ENCODE measurements at regions of chr3 and their contacts with region 1.

Region 1: GRCh38 chr3:42052484-42053351 is 38.4 kb upstream of the TRAK1 start:
- DNase-seq: no peak
- ATAC-seq: no peak
- H3K4me3 ChIP-seq: no peak overlapping the region
- H3K27ac ChIP-seq: no peak overlapping the region
- H3K4me1 ChIP-seq: peaks cover 3 to 4% of the 10 kb centered on the region in 2 experiments; a peak in 3 of 5 replicates
- H3K27me3 ChIP-seq: no peaks in the 10 kb centered on the region
- CTCF ChIP-seq: no peak
- EP300 ChIP-seq: no peak
- POLR2A ChIP-seq: no peak
- RAD21 ChIP-seq: no peak

Region 2: DNA sequence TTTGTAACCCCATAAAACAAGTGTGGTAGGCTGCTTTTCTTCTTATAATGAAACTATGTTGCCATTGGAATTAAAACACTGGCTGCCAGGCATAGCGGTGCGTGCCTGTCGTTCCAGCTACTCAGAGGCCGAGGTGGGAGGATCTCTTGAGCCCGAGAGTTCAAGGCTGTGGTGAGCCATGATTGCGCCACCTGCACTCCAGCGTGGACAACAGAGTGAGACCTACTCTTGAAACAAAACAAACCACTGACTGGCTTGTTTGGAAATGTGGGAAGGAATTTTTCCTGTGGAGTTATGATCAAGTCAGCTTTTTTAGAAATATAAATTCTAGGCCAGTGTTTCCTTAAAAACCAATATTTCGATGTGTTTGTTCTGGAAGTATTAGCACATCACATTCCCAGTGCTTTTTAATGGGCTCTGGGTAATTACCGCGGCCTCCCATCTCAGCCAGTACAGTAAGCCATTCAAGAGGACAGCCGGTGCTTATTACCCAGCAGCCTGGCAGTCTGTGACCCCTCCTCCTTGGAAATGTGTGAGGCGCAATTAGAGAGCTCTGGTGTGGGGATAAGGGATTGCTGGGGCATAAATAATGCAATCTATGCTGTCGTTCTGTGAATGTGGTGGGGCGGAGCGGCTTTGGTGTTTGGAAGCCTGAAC is 19.9 kb before region 1 on chr3:
- CTCF ChIA-PET with region 1: no interaction called
- POLR2A ChIA-PET with region 1: interaction called, 14 read pairs
- in situ Hi-C with region 1: no loop called
- intact Hi-C with region 1: no loop called
- DNase-seq: peak in 1 of 4 experiments; percentile 55
- ATAC-seq: peak; percentile 69
- H3K4me3 ChIP-seq: no peak overlapping the region
- H3K27ac ChIP-seq: no peak overlapping the region
- H3K4me1 ChIP-seq: peaks cover 16 to 18% of the 10 kb centered on the region in 2 experiments; a peak in 4 of 5 replicates
- H3K27me3 ChIP-seq: no peaks in the 10 kb centered on the region
- CTCF ChIP-seq: no peak
- EP300 ChIP-seq: no peak
- POLR2A ChIP-seq: no peak
- RAD21 ChIP-seq: no peak; a peak in 1 of 4 replicates

Region 3: GRCh38 chr3:42067326-42067725 is 14.6 kb after region 1 on chr3:
- CTCF ChIA-PET with region 1: no interaction called
- POLR2A ChIA-PET with region 1: interaction called, 11 read pairs
- in situ Hi-C with region 1: no loop called
- intact Hi-C with region 1: no loop called
- DNase-seq: no peak
- ATAC-seq: no peak
- H3K4me3 ChIP-seq: no peak overlapping the region
- H3K27ac ChIP-seq: no peak overlapping the region
- H3K4me1 ChIP-seq: peaks cover 4 to 5% of the 10 kb centered on the region in 2 experiments; a peak in 2 of 5 replicates
- H3K27me3 ChIP-seq: no peaks in the 10 kb centered on the region
- CTCF ChIP-seq: no peak
- EP300 ChIP-seq: no peak
- POLR2A ChIP-seq: no peak
- RAD21 ChIP-seq: no peak

Measured in K562 (cell line).